ENCODE measurements at regions of chr6 and their contacts with region 1.

Region 1: DNA sequence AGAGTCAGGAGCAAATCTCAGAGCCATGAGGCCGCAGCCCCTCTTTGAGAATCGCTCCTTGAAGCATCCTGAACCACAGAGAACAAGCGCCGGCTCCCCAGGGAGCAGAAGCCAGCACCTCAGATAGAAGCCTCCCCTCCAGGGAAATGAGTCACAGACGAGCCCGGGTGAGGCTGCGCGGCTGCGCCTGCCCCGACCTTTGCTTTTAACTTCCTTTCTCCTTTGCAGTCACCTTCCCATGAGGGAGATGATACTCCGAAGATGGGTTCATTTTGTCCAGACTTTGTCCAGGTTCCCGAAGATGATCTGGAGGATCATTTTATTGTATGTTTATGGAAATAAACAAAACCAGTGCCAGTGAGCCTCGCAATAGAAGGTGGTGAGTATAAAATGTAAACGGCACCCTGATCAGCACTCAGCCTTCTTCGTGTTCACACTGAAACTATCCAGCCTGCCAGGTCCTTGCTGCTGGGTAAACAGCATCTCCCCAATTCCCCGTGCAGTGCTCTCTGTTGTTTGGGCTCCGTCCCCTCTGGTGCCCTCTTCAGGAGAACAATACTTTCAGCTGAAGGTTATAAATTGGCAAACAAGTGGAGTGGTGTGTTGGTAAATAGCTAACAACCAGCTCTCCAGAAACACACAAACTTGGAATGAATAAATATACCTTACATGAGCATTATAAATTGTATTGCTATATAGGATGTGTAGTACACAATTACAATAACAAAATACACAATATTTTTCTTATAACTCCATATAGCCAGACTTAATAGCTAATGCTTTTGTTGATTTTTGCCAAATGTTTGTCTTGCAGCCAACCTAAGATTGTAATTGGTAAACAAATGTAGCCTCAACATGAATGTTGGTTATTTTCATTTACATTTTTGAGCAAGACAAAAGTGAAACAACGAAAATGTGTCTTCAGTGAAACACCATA is 41.4 kb upstream of the TMEM181 start:
- DNase-seq: peak; percentile 87
- H3K4me3 ChIP-seq: peak overlapping the region; percentile 57
- H3K27ac ChIP-seq: no peak overlapping the region
- H3K4me1 ChIP-seq: peaks cover 10% of the 10 kb centered on the region
- CTCF ChIP-seq: peak; percentile 92

Region 2: GRCh38 chr6:158213925-158214674 is 304.4 kb before region 1 on chr6:
- CTCF ChIA-PET with region 1: interaction called, 5 read pairs
- POLR2A ChIA-PET with region 1: interaction called, 3 read pairs
- intact Hi-C with region 1: loop called (anchors 1 kb)
- DNase-seq: peak; percentile 78
- H3K4me3 ChIP-seq: no peak overlapping the region
- H3K27ac ChIP-seq: no peak overlapping the region
- H3K4me1 ChIP-seq: no peaks in the 10 kb centered on the region
- CTCF ChIP-seq: peak; percentile 94

Region 3: GRCh38 chr6:158536084-158536890 is 17.8 kb after region 1 on chr6:
- CTCF ChIA-PET with region 1: no interaction called
- POLR2A ChIA-PET with region 1: no interaction called
- intact Hi-C with region 1: no loop called
- DNase-seq: peak; percentile 54
- H3K4me3 ChIP-seq: no peak overlapping the region
- H3K27ac ChIP-seq: no peak overlapping the region
- H3K4me1 ChIP-seq: no peaks in the 10 kb centered on the region
- CTCF ChIP-seq: no peak

Region 4: GRCh38 chr6:158729914-158730907 is 211.8 kb after region 1 on chr6:
- CTCF ChIA-PET with region 1: no interaction called
- POLR2A ChIA-PET with region 1: no interaction called
- intact Hi-C with region 1: no loop called
- DNase-seq: no peak
- H3K4me3 ChIP-seq: no peak overlapping the region
- H3K27ac ChIP-seq: no peak overlapping the region
- H3K4me1 ChIP-seq: no peaks in the 10 kb centered on the region
- CTCF ChIP-seq: no peak